ENCODE measurements at regions of chr10 and their contacts with region 1.

Region 1: GRCh38 chr10:70221030-70221429 is 12.2 kb downstream of the PPA1 start:
- DNase-seq: no peak
- ATAC-seq: no peak
- H3K4me3 ChIP-seq: no peak overlapping the region
- H3K27ac ChIP-seq: no peak overlapping the region
- H3K4me1 ChIP-seq: peaks cover 29% of the 10 kb centered on the region
- H3K27me3 ChIP-seq: no peaks in the 10 kb centered on the region
- CTCF ChIP-seq: no peak

Region 2: DNA sequence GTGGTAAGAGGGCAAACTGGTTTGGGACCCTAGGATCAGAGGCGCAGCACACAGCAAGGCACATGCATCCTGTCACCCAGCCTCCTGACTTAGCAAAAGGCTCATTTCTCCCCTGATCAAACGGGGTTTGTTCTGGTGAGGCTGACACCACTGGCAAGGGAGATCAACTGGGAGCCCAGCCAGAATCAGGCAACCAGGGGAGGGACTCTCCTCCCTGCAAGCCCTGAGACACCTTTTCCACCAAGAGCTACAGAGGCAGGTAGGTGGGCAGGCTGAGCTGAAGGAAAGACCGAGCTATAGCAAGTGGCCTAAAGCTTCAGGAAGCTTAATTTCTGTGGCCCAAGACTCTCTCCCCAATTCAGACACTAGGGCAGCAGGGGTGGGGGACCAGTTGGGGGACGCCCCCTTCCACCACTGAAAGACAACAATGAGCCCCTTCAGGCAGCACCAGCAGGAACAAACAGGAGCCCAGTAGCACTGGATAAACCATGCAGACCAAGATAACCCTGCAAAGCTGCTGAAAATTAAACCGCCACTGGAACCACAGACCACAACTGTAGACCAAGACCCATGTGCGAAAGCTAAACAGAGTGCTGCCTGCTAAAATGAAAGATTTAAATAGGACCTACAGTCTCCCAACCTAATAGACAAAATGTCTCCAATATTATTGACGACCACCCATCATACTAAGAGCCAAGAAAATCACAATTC is 23.6 kb before region 1 on chr10:
- CTCF ChIA-PET with region 1: interaction called, 12 read pairs
- POLR2A ChIA-PET with region 1: no interaction called
- intact Hi-C with region 1: no loop called
- DNase-seq: no peak
- ATAC-seq: no peak
- H3K4me3 ChIP-seq: no peak overlapping the region
- H3K27ac ChIP-seq: no peak overlapping the region
- H3K4me1 ChIP-seq: peaks cover 8% of the 10 kb centered on the region
- H3K27me3 ChIP-seq: no peaks in the 10 kb centered on the region
- CTCF ChIP-seq: no peak

Region 3: GRCh38 chr10:70267161-70267933 is 46.3 kb after region 1 on chr10:
- CTCF ChIA-PET with region 1: interaction called, 28 read pairs
- POLR2A ChIA-PET with region 1: interaction called, 3 read pairs
- intact Hi-C with region 1: loop called (anchors 2 kb)
- DNase-seq: peak; percentile 99
- ATAC-seq: peak; percentile 97
- H3K4me3 ChIP-seq: no peak overlapping the region
- H3K27ac ChIP-seq: no peak overlapping the region
- H3K4me1 ChIP-seq: peaks cover 16% of the 10 kb centered on the region
- H3K27me3 ChIP-seq: no peaks in the 10 kb centered on the region
- CTCF ChIP-seq: peak; percentile 51

Region 4: GRCh38 chr10:70331486-70332268 is 110.6 kb after region 1 on chr10:
- CTCF ChIA-PET with region 1: interaction called, 3 read pairs
- POLR2A ChIA-PET with region 1: no interaction called
- intact Hi-C with region 1: loop called (anchors 1 kb)
- DNase-seq: peak; percentile 99
- ATAC-seq: peak; percentile 81
- H3K4me3 ChIP-seq: no peak overlapping the region
- H3K27ac ChIP-seq: 0 out of 2 replicates have a peak overlapping the region, but pooled peaks have one; percentile 1
- H3K4me1 ChIP-seq: peaks cover 22% of the 10 kb centered on the region
- H3K27me3 ChIP-seq: no peaks in the 10 kb centered on the region
- CTCF ChIP-seq: peak; percentile 57

Region 5: GRCh38 chr10:70381471-70382421 is 160.7 kb after region 1 on chr10:
- CTCF ChIA-PET with region 1: interaction called, 75 read pairs
- POLR2A ChIA-PET with region 1: interaction called, 3 read pairs
- intact Hi-C with region 1: no loop called
- DNase-seq: peak; percentile 57
- ATAC-seq: peak; percentile 21
- H3K4me3 ChIP-seq: peak overlapping the region; percentile 76
- H3K27ac ChIP-seq: no peak overlapping the region
- H3K4me1 ChIP-seq: peaks cover 28% of the 10 kb centered on the region
- H3K27me3 ChIP-seq: no peaks in the 10 kb centered on the region
- CTCF ChIP-seq: no peak

Region 6: GRCh38 chr10:70404036-70404786 is 183.2 kb after region 1 on chr10 and contains the start of gene EIF4EBP2:
- CTCF ChIA-PET with region 1: interaction called, 5 read pairs
- POLR2A ChIA-PET with region 1: interaction called, 14 read pairs
- intact Hi-C with region 1: no loop called
- DNase-seq: peak; percentile 99
- ATAC-seq: peak; percentile 31
- H3K4me3 ChIP-seq: peak within 1 kb of the TSS; percentile 75
- H3K27ac ChIP-seq: peak within 1 kb of the TSS; percentile 18
- H3K4me1 ChIP-seq: peaks cover 24% of the 10 kb centered on the region
- H3K27me3 ChIP-seq: no peaks in the 10 kb centered on the region
- CTCF ChIP-seq: no peak
- total RNA-seq, gene EIF4EBP2: 29.2 and 32.6 TPM in 2 replicates